ENCODE measurements at regions of chr3 and their contacts with region 1.

Region 1: GRCh38 chr3:40971191-40972168 is 227.8 kb upstream of the CTNNB1 start:
- DNase-seq: peak; percentile 75 to 98
- H3K4me3 ChIP-seq: no peak overlapping the region; the same call in 1 of the 2 replicates
- H3K27ac ChIP-seq: peak overlapping the region; percentile 92
- H3K4me1 ChIP-seq: peaks cover 32% of the 10 kb centered on the region
- H3K27me3 ChIP-seq: no peaks in the 10 kb centered on the region
- CTCF ChIP-seq: no peak; the same call in 1 of the 2 replicates

Region 2: GRCh38 chr3:40623567-40623966 is 347.9 kb before region 1 on chr3:
- CTCF ChIA-PET with region 1: no interaction called
- POLR2A ChIA-PET with region 1: no interaction called
- intact Hi-C with region 1: no loop called
- DNase-seq: peak; percentile 12 to 82
- H3K4me3 ChIP-seq: no peak overlapping the region
- H3K27ac ChIP-seq: no peak overlapping the region
- H3K4me1 ChIP-seq: peaks cover 20% of the 10 kb centered on the region
- H3K27me3 ChIP-seq: no peaks in the 10 kb centered on the region
- CTCF ChIP-seq: no peak

Region 3: DNA sequence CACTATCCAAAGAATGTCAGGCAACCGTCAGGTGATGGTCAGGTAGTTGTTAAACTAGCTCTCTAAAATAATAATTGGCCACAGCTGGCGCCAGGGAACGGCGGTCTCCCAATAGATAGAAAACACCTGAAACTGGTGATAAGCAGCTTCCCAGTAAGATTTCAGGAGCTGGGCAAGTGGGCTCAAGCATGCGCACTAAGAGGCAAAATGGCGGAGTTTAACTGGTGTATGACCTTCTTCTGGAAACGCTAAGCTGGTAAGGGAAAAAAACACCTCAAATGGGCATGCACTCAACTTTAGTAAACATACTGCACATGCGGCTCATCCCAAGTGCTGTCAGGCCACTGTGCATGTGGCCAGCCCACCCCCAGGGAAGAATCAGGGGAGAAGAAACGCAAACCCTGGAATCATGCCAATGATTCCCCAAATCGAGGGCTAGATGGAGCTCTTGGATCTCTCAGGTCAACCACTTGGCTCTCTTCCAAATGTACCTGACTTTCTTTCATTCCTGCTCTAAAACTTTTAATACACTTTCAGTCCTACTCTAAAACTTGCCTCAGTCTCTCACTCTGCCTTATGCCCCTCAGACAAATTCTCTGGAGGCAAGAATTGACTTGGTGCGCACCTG is 251.7 kb before region 1 on chr3:
- CTCF ChIA-PET with region 1: no interaction called
- POLR2A ChIA-PET with region 1: no interaction called
- intact Hi-C with region 1: loop called (anchors 1 kb)
- DNase-seq: peak in 1 of 2 experiments; percentile 17
- H3K4me3 ChIP-seq: no peak overlapping the region
- H3K27ac ChIP-seq: no peak overlapping the region
- H3K4me1 ChIP-seq: no peaks in the 10 kb centered on the region; the same call in 1 of the 2 replicates
- H3K27me3 ChIP-seq: no peaks in the 10 kb centered on the region
- CTCF ChIP-seq: peak; percentile 46; the same call in 1 of the 2 replicates

Region 4: DNA sequence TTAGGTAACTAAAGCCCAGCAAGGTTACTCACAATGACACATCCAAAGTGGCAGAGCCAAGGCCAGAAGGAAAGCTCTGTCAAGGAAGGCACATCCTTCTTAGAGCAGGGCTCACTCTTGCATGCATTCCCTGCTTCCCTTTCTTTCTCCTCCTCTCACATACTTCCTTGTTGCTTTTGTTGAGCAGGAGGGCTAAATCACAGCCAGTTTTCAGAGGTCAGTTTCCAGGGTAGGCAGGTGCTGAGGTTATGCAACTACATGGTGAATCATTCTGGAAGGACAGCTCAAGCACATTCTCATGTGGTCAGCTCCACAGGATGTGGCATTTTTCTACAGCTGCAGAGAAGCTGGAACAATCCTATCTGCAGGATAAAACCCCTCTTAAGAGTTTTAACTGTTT is 171.1 kb before region 1 on chr3:
- CTCF ChIA-PET with region 1: no interaction called
- POLR2A ChIA-PET with region 1: no interaction called
- intact Hi-C with region 1: loop called (anchors 1 kb)
- DNase-seq: peak; percentile 71 to 92
- H3K4me3 ChIP-seq: no peak overlapping the region
- H3K27ac ChIP-seq: peak overlapping the region; percentile 77
- H3K4me1 ChIP-seq: peaks cover 21% of the 10 kb centered on the region
- H3K27me3 ChIP-seq: no peaks in the 10 kb centered on the region
- CTCF ChIP-seq: no peak

Region 5: GRCh38 chr3:41117398-41117870 is 146.0 kb after region 1 on chr3:
- CTCF ChIA-PET with region 1: interaction called, 4 read pairs
- POLR2A ChIA-PET with region 1: no interaction called
- intact Hi-C with region 1: loop called (anchors 1 kb)
- DNase-seq: peak; percentile 92 to 98
- H3K4me3 ChIP-seq: no peak overlapping the region; the same call in 1 of the 2 replicates
- H3K27ac ChIP-seq: peak overlapping the region; percentile 79
- H3K4me1 ChIP-seq: peaks cover 15% of the 10 kb centered on the region
- H3K27me3 ChIP-seq: no peaks in the 10 kb centered on the region
- CTCF ChIP-seq: no peak

Measured in PC-9 (cell line).